Breast epithelium (tissue), 4 donors: ENCODE measurements at regions of chr11 and their contacts with region 1.

Region 1: GRCh38 chr11:94332814-94333213 is 28.4 kb downstream of the IZUMO1R start:
- DNase-seq: no peak
- H3K4me3 ChIP-seq: no peak overlapping the region
- H3K27ac ChIP-seq: no peak overlapping the region
- H3K4me1 ChIP-seq: no peaks in the 10 kb centered on the region
- H3K27me3 ChIP-seq: no peaks in the 10 kb centered on the region
- CTCF ChIP-seq: no peak
- POLR2A ChIP-seq: no peak

Region 2: DNA sequence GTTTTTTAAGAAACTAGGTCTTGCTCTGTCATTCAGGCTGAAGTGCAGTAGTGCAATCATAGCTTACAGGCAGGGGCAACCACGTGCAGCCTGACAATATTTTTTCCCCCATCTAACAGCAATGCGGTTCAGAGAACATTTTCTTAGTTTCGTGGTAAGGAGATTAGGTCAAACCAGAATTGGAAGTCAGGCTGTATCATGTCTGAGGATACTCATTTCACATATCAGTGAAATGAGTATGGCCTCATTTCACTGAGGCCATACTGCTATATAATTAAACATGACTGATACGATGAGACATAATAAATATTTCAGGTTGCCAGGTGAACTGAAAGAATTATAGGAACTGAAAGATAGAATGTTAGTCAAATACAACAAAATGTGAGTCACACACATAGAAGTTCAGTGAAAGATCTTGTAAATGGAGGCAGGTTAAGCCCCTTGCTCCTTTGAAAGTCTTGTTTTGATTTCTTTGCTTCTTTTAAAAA is 60.9 kb before region 1 on chr11:
- intact Hi-C with region 1: loop called (anchors 2 kb)
- DNase-seq: no peak
- H3K4me3 ChIP-seq: no peak overlapping the region
- H3K27ac ChIP-seq: no peak overlapping the region
- H3K4me1 ChIP-seq: no peaks in the 10 kb centered on the region
- H3K27me3 ChIP-seq: no peaks in the 10 kb centered on the region
- CTCF ChIP-seq: no peak
- POLR2A ChIP-seq: no peak

Region 3: DNA sequence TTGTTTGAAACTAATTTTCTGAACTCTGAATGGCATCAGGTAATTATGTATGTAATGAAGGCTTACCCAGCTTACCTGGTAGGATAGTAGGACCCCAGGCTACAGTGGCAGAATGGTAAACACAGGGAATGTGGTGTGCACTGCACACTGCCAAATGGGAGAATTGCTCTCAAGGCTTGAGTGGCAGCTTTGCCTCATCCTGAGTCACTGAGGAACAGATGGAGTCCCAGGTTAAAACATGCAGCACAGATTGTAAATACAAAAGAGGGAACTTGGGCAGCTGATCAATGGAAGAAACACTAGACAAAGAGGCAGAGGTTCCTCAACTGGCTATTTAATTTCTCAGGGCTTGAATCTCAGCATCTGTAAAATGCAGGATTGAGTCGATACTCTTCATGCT is 44.0 kb after region 1 on chr11:
- intact Hi-C with region 1: no loop called
- DNase-seq: no peak
- H3K4me3 ChIP-seq: no peak overlapping the region
- H3K27ac ChIP-seq: no peak overlapping the region
- H3K4me1 ChIP-seq: no peaks in the 10 kb centered on the region
- H3K27me3 ChIP-seq: no peaks in the 10 kb centered on the region
- CTCF ChIP-seq: no peak
- POLR2A ChIP-seq: no peak